Aorta (tissue), 5 donors: ENCODE measurements at regions of chr11 and their contacts with region 1.

Region 1: GRCh38 chr11:133705074-133705648 is 140.2 kb downstream of the SPATA19 start:
- DNase-seq: no peak
- ATAC-seq: no peak
- H3K4me3 ChIP-seq: no peak overlapping the region
- H3K27ac ChIP-seq: no peak overlapping the region
- H3K4me1 ChIP-seq: no peaks in the 10 kb centered on the region
- H3K27me3 ChIP-seq: no peaks in the 10 kb centered on the region

Region 2: DNA sequence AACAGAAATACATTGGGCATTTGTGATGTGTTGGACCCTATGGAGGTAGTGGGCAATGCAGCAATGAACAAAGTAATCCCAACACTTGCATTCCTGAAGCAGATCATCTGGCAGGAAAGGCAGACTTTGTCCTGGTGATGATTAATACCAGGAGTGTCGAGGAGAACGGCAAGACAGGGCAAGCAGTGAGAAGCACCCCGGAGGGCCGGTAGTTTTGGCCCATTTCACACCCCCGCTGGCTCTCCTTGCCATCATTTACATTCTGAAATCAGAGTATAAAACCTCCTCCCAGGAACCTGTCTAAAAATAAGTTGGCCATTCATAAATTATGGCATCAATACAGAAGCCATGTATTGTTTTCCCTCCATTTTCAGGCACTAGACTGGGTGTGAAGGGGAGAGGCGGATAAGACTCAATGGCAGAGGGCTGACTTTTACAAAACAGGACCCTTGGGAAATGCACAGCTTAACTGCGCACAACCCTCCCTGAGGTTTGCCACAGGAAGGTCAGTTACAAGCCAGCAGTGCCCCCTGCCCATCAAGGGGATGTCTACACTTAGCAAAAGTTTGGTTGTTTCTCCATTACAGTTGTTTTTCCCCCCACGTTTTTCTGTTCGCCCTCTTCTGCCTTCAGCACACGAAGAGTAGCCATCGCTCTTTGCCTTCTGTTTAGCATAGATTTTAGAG is 228.4 kb before region 1 on chr11:
- intact Hi-C with region 1: loop called in 1 of 2 experiments (anchors 10 kb)
- DNase-seq: no peak
- ATAC-seq: no peak
- H3K4me3 ChIP-seq: no peak overlapping the region
- H3K27ac ChIP-seq: no peak overlapping the region
- H3K4me1 ChIP-seq: no peaks in the 10 kb centered on the region
- H3K27me3 ChIP-seq: no peaks in the 10 kb centered on the region